PC-3 (cell line): ENCODE measurements at regions of chr4 and their contacts with region 1.

Region 1: DNA sequence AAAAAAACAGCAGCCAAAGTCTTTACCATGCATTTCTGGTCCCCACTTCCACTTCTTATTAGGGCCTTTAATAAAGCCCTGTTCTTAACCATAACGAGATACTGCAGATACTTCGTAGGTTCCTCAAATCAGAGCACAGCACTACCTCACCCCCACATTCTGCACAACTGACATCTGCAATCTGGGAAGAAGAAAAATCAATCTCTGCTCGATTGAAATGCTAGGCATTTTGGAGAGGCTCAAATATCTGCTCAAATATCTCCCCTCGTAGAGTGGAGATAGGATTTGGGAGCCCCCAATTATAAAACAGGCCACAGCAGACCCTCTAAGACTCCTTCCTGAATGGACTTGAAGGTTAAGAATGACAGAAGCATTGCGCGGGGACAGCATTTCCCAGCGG is 40.3 kb upstream of the CENPU start:
- DNase-seq: no peak
- ATAC-seq: no peak
- H3K4me3 ChIP-seq: no peak overlapping the region
- H3K27ac ChIP-seq: no peak overlapping the region
- H3K4me1 ChIP-seq: no peaks in the 10 kb centered on the region
- H3K27me3 ChIP-seq: no peaks in the 10 kb centered on the region
- CTCF ChIP-seq: no peak

Region 2: DNA sequence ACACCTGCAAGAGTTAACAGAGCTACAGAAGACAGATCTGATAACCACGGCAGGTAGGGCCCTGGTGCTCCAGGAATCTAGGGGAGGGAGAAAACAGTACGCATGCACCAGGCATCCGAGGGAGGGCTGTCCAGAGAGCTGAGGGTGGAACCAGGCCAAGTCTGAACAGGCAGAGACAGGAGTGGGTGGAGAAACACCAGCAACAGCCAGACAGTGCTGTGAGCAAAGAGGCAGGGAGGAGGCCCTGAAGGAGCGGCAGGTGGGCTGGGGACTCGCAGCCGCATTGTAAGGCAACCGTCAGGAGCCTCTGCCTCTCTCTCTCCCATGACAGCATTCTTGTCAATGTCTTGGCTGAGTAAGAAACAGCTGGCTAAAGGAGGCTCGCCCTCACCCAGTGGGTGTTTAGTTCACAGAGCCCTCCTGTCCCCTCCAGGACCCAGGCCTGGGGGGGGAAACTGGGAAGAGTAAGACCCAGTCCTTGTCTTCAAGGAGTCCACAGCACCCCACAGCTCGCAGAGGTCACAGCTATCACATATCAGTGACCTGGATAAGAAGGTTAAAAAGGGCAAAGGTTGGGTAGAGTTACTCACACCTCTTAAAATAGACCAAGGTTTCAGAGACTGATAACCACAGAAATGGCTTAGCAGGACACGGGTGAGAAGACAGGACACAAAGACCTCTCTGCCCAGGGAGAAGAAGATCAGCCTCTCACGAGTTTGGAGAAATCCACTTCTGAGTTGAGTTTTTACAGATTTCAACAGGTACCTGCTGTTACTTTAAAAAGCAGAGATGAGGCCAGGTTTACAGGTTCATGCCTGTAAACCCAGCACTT is 41.1 kb after region 1 on chr4:
- CTCF ChIA-PET with region 1: no interaction called
- POLR2A ChIA-PET with region 1: interaction called, 24 read pairs
- intact Hi-C with region 1: no loop called
- DNase-seq: peak; percentile 72
- ATAC-seq: peak; percentile 79
- H3K4me3 ChIP-seq: peak overlapping the region; percentile 54
- H3K27ac ChIP-seq: 0 out of 2 replicates have a peak overlapping the region, but pooled peaks have one; percentile 4
- H3K4me1 ChIP-seq: peaks cover 41% of the 10 kb centered on the region
- H3K27me3 ChIP-seq: no peaks in the 10 kb centered on the region
- CTCF ChIP-seq: no peak